ENCODE measurements at regions of chr12 and their contacts with region 1.

Region 1: GRCh38 chr12:102811110-102811737 is 105.8 kb downstream of the PAH start:
- DNase-seq: peak in 1 of 2 experiments; percentile 66
- H3K4me3 ChIP-seq: no peak overlapping the region
- H3K27ac ChIP-seq: no peak overlapping the region
- H3K4me1 ChIP-seq: peaks cover 0 to 3% (median 1%) of the 10 kb centered on the region in 4 experiments; a peak in 4 of 7 replicates
- H3K27me3 ChIP-seq: no peaks in the 10 kb centered on the region
- CTCF ChIP-seq: peak; percentile 61 to 75 (median 61)
- EP300 ChIP-seq: no peak
- POLR2A ChIP-seq: no peak
- RAD21 ChIP-seq: peak; percentile 87 to 89

Region 2: DNA sequence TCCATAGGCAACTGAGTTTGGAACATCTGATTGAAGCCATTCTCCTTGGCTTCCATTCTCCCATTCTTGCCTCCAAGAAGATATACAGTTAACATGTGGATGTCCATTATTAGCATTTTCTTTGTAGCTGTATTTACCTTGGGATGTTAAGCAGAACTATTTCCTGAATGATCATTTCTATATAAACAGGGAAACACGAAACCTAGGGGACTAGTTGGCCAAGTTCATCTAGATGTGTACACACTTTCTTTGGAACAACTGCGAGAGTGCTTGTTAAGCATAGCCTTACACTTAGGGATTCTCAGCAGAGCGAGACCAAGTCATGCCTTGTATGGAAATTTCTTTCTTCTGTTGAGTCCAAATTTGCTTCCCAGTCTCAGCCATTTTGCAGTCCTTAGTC is 891.8 kb before region 1 on chr12:
- CTCF ChIA-PET with region 1: interaction called, 12 read pairs
- POLR2A ChIA-PET with region 1: no interaction called
- DNase-seq: no peak
- H3K4me3 ChIP-seq: no peak overlapping the region
- H3K27ac ChIP-seq: no peak overlapping the region
- H3K4me1 ChIP-seq: no peaks in the 10 kb centered on the region
- H3K27me3 ChIP-seq: no peaks in the 10 kb centered on the region
- CTCF ChIP-seq: no peak
- EP300 ChIP-seq: no peak
- POLR2A ChIP-seq: no peak
- RAD21 ChIP-seq: no peak

Region 3: DNA sequence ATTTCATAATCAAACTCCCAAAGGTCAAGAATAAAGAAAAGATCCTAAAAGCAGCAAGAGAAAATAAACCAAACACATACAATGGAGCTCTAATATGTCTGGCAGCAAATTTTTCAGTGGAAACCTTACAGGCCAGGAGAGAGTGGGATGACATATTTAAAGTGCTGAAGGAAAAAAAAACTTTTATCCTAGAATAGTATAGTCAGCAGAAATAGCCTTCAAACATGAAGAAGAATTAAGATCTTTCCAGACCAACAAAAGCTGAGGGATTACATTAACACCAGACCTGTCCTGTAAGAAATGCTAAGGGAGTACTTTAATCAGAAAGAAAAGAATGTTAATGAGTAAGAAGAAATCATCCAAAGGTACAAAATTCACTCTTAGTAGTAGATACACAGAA is 115.2 kb before region 1 on chr12:
- CTCF ChIA-PET with region 1: no interaction called
- POLR2A ChIA-PET with region 1: no interaction called
- DNase-seq: no peak
- H3K4me3 ChIP-seq: no peak overlapping the region
- H3K27ac ChIP-seq: no peak overlapping the region
- H3K4me1 ChIP-seq: peaks cover 0 to 4% (median 2%) of the 10 kb centered on the region in 4 experiments; a peak in 1 of 7 replicates
- H3K27me3 ChIP-seq: no peaks in the 10 kb centered on the region
- CTCF ChIP-seq: no peak
- EP300 ChIP-seq: no peak
- POLR2A ChIP-seq: no peak
- RAD21 ChIP-seq: no peak

Region 4: GRCh38 chr12:102708108-102708507 is 103.1 kb before region 1 on chr12:
- CTCF ChIA-PET with region 1: interaction called, 10 read pairs
- POLR2A ChIA-PET with region 1: no interaction called
- DNase-seq: no peak
- H3K4me3 ChIP-seq: no peak overlapping the region
- H3K27ac ChIP-seq: no peak overlapping the region
- H3K4me1 ChIP-seq: no peaks in the 10 kb centered on the region
- H3K27me3 ChIP-seq: no peaks in the 10 kb centered on the region
- CTCF ChIP-seq: no peak
- EP300 ChIP-seq: no peak
- POLR2A ChIP-seq: no peak
- RAD21 ChIP-seq: no peak

Region 5: GRCh38 chr12:102769319-102769916 is 41.8 kb before region 1 on chr12:
- CTCF ChIA-PET with region 1: interaction called, 25 read pairs
- POLR2A ChIA-PET with region 1: no interaction called
- DNase-seq: peak; percentile 10 to 70
- H3K4me3 ChIP-seq: no peak overlapping the region
- H3K27ac ChIP-seq: no peak overlapping the region
- H3K4me1 ChIP-seq: no peaks in the 10 kb centered on the region
- H3K27me3 ChIP-seq: no peaks in the 10 kb centered on the region
- CTCF ChIP-seq: peak; percentile 58 to 80 (median 78)
- EP300 ChIP-seq: no peak
- POLR2A ChIP-seq: no peak
- RAD21 ChIP-seq: peak; percentile 85 to 88

Region 6: DNA sequence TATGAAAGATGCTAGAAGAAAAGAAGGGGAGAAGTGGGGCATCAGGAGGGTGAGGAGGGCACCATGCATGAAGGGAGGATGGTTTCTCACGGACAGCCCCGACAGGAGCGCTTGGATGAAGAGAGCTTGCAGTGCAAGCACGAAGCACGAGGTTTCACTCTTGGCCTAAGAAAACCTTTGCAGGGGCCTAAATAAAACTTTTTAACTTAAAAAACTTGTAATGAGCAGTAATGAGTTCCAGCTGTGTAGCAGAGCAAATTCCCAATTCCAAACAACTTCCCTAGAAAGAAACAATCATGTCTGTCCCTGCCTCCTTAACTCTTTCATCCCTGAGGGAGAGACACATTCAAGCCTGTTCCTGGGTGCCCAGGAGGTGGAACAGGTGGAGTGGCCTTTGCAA is 13.7 kb before region 1 on chr12:
- CTCF ChIA-PET with region 1: interaction called, 27 read pairs
- POLR2A ChIA-PET with region 1: no interaction called
- DNase-seq: no peak
- H3K4me3 ChIP-seq: no peak overlapping the region
- H3K27ac ChIP-seq: no peak overlapping the region
- H3K4me1 ChIP-seq: no peaks in the 10 kb centered on the region
- H3K27me3 ChIP-seq: no peaks in the 10 kb centered on the region
- CTCF ChIP-seq: no peak
- EP300 ChIP-seq: no peak
- POLR2A ChIP-seq: no peak
- RAD21 ChIP-seq: no peak

Region 7: DNA sequence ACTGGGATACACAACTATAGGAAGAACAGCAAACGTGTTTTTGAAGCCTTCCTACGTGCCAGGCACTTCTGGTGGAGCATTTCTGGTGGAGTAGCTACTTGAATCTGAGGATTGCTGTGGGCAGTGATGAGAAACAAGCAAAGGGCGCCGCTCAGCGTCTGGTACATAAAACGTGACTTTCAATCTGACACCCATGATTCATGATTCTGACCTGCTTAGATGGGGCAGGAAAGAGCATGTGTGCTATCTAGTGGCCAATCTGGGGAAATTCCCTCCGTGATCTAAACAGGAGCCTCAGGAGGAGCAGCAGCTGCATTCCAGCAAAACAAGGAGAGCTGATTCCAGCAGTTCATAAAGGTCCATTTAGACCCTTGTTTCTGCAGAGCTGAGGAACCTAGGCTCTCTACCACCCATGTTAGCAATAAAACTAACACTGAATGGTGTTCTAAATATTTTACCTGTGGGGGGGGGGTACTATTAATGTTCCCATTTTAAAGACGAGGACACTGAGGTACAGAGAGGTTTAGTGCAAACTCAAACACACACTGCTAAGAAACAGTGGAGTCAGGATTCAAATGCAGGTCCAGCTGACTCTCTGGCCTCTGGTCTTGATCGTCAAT is 68.0 kb after region 1 on chr12:
- CTCF ChIA-PET with region 1: interaction called, 18 read pairs
- POLR2A ChIA-PET with region 1: no interaction called
- DNase-seq: peak; percentile 47 to 57
- H3K4me3 ChIP-seq: no peak overlapping the region; a peak in 1 of 8 replicates
- H3K27ac ChIP-seq: no peak overlapping the region
- H3K4me1 ChIP-seq: peaks cover 0 to 3% (median 0%) of the 10 kb centered on the region in 4 experiments; a peak in 2 of 7 replicates
- H3K27me3 ChIP-seq: no peaks in the 10 kb centered on the region
- CTCF ChIP-seq: peak; percentile 46 to 97 (median 95)
- EP300 ChIP-seq: no peak
- POLR2A ChIP-seq: no peak
- RAD21 ChIP-seq: peak; percentile 92 to 93

Region 8: GRCh38 chr12:103043531-103044486 is 232.6 kb after region 1 on chr12:
- CTCF ChIA-PET with region 1: no interaction called
- POLR2A ChIA-PET with region 1: no interaction called
- DNase-seq: no peak
- H3K4me3 ChIP-seq: peak overlapping the region; percentile 4 to 46 (median 26); a peak in 6 of 8 replicates
- H3K27ac ChIP-seq: no peak overlapping the region
- H3K4me1 ChIP-seq: peaks cover 2 to 12% (median 6%) of the 10 kb centered on the region in 4 experiments; a peak in 6 of 7 replicates
- H3K27me3 ChIP-seq: peaks cover 0 to 1% (median 0%) of the 10 kb centered on the region in 4 experiments; a peak in 1 of 7 replicates
- CTCF ChIP-seq: no peak
- EP300 ChIP-seq: no peak
- POLR2A ChIP-seq: no peak
- RAD21 ChIP-seq: no peak